WTC11 (cell line): ENCODE measurements at regions of chr7 and their contacts with region 1.

Region 1: DNA sequence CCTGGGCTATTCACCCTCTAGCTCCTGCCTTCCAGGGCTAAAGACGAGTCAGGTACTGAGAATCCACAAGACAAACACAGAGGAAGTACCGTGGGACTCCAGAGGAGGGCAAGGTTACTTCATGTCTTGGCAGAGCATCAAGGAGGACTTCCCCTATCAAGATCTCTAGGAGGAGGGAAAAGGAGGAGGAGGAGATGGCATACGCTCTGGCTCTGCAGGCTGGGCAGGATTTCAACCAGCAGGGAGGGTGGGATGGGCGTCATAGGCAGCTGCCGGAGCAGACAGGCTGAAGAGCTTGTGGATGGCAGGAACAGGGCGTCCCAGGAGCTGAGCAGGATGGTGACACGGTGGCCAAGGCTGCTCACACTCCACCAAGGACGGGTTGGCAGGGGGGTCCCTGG is 21.3 kb downstream of the MDH2 start:
- DNase-seq: peak; percentile 43
- ATAC-seq: peak; percentile 64
- H3K4me3 Mint-ChIP-seq: no peak overlapping the region
- H3K27ac Mint-ChIP-seq: peak overlapping the region; percentile 57; the same call in 1 of the 2 replicates
- H3K4me1 Mint-ChIP-seq: peaks cover 3% of the 10 kb centered on the region; the same call in 1 of the 2 replicates
- H3K27me3 Mint-ChIP-seq: no peaks in the 10 kb centered on the region
- CTCF ChIP-seq: no peak

Region 2: GRCh38 chr7:76129366-76129765 is 60.1 kb after region 1 on chr7:
- CTCF ChIA-PET with region 1: interaction called, 11 read pairs
- POLR2A ChIA-PET with region 1: no interaction called
- DNase-seq: no peak
- ATAC-seq: no peak
- H3K4me3 Mint-ChIP-seq: no peak overlapping the region
- H3K27ac Mint-ChIP-seq: no peak overlapping the region
- H3K4me1 Mint-ChIP-seq: no peaks in the 10 kb centered on the region
- H3K27me3 Mint-ChIP-seq: no peaks in the 10 kb centered on the region
- CTCF ChIP-seq: no peak

Region 3: DNA sequence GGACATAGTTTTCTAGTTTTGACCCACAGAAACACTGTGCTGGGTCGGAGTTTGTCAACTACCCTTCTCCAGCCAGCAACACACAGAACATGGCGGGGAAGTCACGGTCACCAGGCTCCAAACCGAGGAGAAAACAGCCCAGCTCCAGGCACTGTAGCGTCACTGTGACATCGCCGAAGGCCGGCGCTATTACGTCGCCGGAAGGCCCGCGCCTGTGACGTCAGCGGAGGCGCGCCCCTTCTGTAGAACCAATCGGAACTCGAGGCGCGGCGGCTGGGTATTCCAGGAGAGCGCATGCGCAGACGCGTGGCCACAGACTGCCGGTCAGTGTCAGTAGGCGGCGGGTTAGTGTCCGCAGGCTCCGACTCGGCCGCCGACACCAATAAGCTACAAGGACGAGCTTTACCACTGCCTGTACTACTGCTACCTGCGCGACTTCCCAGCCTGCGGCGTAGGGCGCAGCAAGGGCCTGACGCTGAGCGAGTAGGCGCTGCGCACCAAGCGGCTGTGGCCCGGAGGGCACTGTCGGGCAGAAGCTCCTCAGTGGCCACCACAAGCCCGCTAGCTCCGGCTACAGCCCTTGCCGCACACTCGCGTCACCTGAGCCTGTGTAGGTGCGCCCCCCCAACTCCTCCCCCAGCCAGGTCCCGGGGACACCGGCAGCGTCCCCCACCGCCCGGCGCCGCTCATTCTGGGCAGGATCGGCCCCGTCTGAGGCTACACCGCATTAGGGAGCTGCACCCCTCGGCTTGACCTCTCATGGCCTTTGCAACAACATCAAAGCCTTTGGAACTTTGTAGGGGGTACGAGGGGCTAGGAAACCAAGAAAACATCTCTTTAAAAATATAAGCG is 97.4 kb after region 1 on chr7:
- CTCF ChIA-PET with region 1: interaction called, 10 read pairs
- POLR2A ChIA-PET with region 1: interaction called, 6 read pairs
- DNase-seq: peak; percentile 98
- ATAC-seq: peak; percentile 70
- H3K4me3 Mint-ChIP-seq: peak overlapping the region; percentile 70
- H3K27ac Mint-ChIP-seq: peak overlapping the region; percentile 99
- H3K4me1 Mint-ChIP-seq: peaks cover 35% of the 10 kb centered on the region
- H3K27me3 Mint-ChIP-seq: no peaks in the 10 kb centered on the region
- CTCF ChIP-seq: no peak

Region 4: DNA sequence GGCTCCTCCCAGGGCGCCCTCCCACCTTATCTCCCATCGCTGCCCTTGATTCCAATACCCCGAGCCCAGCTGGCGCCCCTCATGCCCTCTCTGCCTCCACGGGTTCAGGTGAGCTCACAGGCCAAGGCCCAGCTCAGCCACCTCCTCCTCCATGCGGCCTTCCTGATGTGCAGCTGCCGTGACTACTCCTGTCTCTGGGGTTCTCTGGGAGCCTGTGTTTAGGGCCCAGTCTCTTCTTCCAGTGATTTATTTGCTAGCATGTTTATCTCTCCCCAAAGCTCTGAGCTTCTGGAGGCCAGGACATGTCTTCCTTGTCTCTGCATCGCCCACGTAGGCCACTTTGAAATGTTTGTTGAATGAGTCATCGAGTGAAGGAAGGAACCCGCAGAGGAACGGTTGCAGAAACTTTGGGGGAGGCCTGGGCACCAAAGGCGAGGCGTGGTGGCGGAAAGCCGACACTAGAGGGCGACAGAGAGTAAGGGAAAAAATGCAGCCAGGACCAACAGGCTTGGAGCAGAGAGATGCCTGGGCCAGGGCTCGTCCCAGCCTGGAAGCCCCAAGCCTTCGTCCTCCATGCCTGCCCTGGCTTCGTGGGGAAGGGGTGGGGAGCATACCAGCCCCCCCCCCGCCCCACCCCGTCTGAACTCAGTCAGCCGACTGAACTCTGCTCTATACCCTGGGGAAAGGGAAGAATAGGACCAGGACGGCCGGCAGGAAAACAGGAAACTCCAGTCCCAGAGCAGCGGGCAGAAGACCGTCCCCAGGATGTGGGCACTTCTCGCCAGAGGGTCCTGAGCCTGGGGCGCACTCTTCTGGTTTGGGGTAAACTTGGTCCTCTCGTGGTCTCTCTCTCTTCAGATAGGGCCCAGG is 222.3 kb after region 1 on chr7:
- CTCF ChIA-PET with region 1: interaction called, 12 read pairs
- POLR2A ChIA-PET with region 1: no interaction called
- DNase-seq: peak; percentile 93
- ATAC-seq: peak; percentile 79
- H3K4me3 Mint-ChIP-seq: no peak overlapping the region
- H3K27ac Mint-ChIP-seq: peak overlapping the region; percentile 96
- H3K4me1 Mint-ChIP-seq: peaks cover 39% of the 10 kb centered on the region
- H3K27me3 Mint-ChIP-seq: peaks cover 3% of the 10 kb centered on the region
- CTCF ChIP-seq: peak; percentile 97